ENCODE measurements at regions of chr3 and their contacts with region 1.

Region 1: GRCh38 chr3:48439820-48440589 is at the starts of genes CCDC51 and TMA7:
- DNase-seq: peak; percentile 99
- ATAC-seq: peak; percentile 95
- H3K4me3 Mint-ChIP-seq: peak within 1 kb of the TSS; percentile 99
- H3K27ac Mint-ChIP-seq: peak within 1 kb of the TSS; percentile 99
- H3K4me1 Mint-ChIP-seq: peaks cover 17% of the 10 kb centered on the region
- H3K27me3 Mint-ChIP-seq: no peaks in the 10 kb centered on the region
- CTCF ChIP-seq: no peak
- total RNA-seq, gene CCDC51: 23.9 to 25.1 TPM (median 24.7 TPM) in 3 replicates
- total RNA-seq, gene TMA7: 281 to 318 TPM (median 285 TPM) in 3 replicates

Region 2: GRCh38 chr3:48130321-48130904 is 309.6 kb before region 1 on chr3:
- CTCF ChIA-PET with region 1: no interaction called
- POLR2A ChIA-PET with region 1: no interaction called
- DNase-seq: no peak
- ATAC-seq: peak; percentile 41
- H3K4me3 Mint-ChIP-seq: no peak overlapping the region
- H3K27ac Mint-ChIP-seq: no peak overlapping the region
- H3K4me1 Mint-ChIP-seq: peaks cover under 1% of the 10 kb centered on the region
- H3K27me3 Mint-ChIP-seq: no peaks in the 10 kb centered on the region
- CTCF ChIP-seq: no peak

Region 3: DNA sequence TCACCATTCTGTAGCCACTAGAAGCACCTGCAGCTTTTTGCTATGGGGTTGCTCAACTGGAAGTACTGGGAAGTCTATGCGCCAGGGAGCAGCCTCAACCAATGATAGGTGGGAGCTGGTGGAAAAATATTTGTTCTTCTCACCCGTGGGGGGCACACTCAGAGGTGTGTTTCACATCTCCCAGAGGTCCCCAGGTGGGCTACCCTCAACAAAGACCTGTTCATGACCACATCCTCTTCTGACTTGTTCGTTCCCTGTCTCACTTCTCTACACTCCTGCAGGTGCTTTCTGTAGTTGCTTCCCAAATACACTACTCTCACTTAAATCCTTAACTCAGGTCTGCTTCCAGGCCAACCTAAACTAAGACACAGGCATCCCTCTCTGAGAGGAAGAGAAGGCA is 213.1 kb before region 1 on chr3:
- CTCF ChIA-PET with region 1: interaction called, 30 read pairs
- POLR2A ChIA-PET with region 1: no interaction called
- DNase-seq: no peak
- ATAC-seq: no peak
- H3K4me3 Mint-ChIP-seq: no peak overlapping the region
- H3K27ac Mint-ChIP-seq: no peak overlapping the region; the same call in 1 of the 2 replicates
- H3K4me1 Mint-ChIP-seq: peaks cover 3% of the 10 kb centered on the region
- H3K27me3 Mint-ChIP-seq: peaks cover 17% of the 10 kb centered on the region
- CTCF ChIP-seq: no peak

Region 4: GRCh38 chr3:48285132-48285531 is 154.9 kb before region 1 on chr3:
- CTCF ChIA-PET with region 1: interaction called, 56 read pairs
- POLR2A ChIA-PET with region 1: no interaction called
- DNase-seq: no peak
- ATAC-seq: no peak
- H3K4me3 Mint-ChIP-seq: no peak overlapping the region
- H3K27ac Mint-ChIP-seq: no peak overlapping the region
- H3K4me1 Mint-ChIP-seq: no peaks in the 10 kb centered on the region
- H3K27me3 Mint-ChIP-seq: no peaks in the 10 kb centered on the region
- CTCF ChIP-seq: no peak

Region 5: GRCh38 chr3:48394391-48394790 is 45.6 kb before region 1 on chr3:
- CTCF ChIA-PET with region 1: interaction called, 378 read pairs
- POLR2A ChIA-PET with region 1: interaction called, 6 read pairs
- DNase-seq: no peak
- ATAC-seq: no peak
- H3K4me3 Mint-ChIP-seq: no peak overlapping the region
- H3K27ac Mint-ChIP-seq: no peak overlapping the region
- H3K4me1 Mint-ChIP-seq: peaks cover 9% of the 10 kb centered on the region
- H3K27me3 Mint-ChIP-seq: peaks cover 16% of the 10 kb centered on the region
- CTCF ChIP-seq: no peak

Region 6: GRCh38 chr3:48472915-48473616 is 33.1 kb after region 1 on chr3:
- CTCF ChIA-PET with region 1: interaction called, 68 read pairs
- POLR2A ChIA-PET with region 1: interaction called, 7 read pairs
- DNase-seq: peak; percentile 96
- ATAC-seq: peak; percentile 82
- H3K4me3 Mint-ChIP-seq: peak overlapping the region; percentile 91
- H3K27ac Mint-ChIP-seq: peak overlapping the region; percentile 99
- H3K4me1 Mint-ChIP-seq: peaks cover 30% of the 10 kb centered on the region
- H3K27me3 Mint-ChIP-seq: no peaks in the 10 kb centered on the region; the same call in none of the 2 replicates
- CTCF ChIP-seq: peak; percentile 45; the same call in 1 of the 2 replicates

Region 7: DNA sequence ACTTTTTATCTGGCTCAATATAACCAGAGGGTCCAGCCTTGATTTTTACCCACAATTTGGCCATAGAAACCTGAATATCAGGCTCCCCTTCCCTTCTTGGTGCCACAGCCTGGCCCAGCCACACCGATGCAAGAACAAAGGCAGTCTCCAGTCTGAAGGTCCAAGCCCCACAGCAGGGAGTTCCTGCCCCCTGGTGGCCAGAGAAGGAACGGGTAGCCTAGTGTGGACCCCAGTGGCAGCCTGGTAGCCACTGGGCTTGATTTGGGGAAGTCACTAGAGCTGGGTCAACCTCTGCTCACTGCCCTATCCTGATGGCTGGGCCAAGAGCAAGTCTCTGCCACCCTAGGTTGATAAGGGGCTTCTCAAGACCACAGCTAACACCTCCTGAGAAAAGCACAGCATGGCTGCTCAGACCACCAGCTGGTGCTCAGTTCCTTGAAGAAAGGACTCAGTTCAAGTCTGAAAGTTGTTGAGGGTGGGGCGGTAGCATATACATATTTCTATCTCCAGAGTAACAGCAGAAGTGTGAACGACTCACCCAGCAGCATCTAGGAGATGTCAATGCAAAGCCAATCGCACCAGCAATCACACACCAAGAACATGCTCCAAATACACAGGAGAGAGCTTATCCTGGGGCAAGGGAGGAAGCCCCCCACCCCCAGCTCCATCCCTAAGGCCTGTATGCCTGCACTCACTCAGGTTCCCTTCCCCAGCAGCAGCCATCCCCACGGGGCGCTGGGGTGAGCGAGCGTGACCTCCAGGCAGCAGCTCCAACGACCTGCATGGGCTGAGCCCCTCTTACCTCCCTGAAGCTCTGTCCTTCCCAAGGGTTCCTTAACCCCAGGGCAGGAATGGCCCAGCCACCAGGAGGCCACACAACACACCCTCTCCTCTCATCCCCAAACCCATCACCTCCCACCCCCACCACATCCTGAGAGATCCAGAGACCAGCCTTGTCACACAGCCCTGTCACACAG is 109.0 kb after region 1 on chr3:
- CTCF ChIA-PET with region 1: interaction called, 84 read pairs
- POLR2A ChIA-PET with region 1: no interaction called
- DNase-seq: peak; percentile 91
- ATAC-seq: peak; percentile 97
- H3K4me3 Mint-ChIP-seq: no peak overlapping the region
- H3K27ac Mint-ChIP-seq: peak overlapping the region; percentile 87
- H3K4me1 Mint-ChIP-seq: peaks cover 16% of the 10 kb centered on the region
- H3K27me3 Mint-ChIP-seq: no peaks in the 10 kb centered on the region
- CTCF ChIP-seq: peak; percentile 76

Measured in WTC11 (cell line).